A549 (cell line): ENCODE measurements at regions of chr11 and their contacts with region 1.

Region 1: GRCh38 chr11:87290304-87290922 is 252.7 kb downstream of the TMEM135 start:
- DNase-seq: peak; percentile 42 to 59
- ATAC-seq: peak; percentile 66 to 73; a peak in 5 of 6 replicates
- H3K4me3 ChIP-seq: no peak overlapping the region
- H3K27ac ChIP-seq: no peak overlapping the region
- H3K4me1 ChIP-seq: no peaks in the 10 kb centered on the region
- CTCF ChIP-seq: peak; percentile 86
- EP300 ChIP-seq: no peak
- POLR2A ChIP-seq: no peak
- RAD21 ChIP-seq: peak; percentile 85 to 91

Region 2: GRCh38 chr11:86930957-86931547 is 359.4 kb before region 1 on chr11:
- CTCF ChIA-PET with region 1: interaction called, 11 read pairs
- POLR2A ChIA-PET with region 1: no interaction called
- DNase-seq: no peak
- ATAC-seq: no peak
- H3K4me3 ChIP-seq: no peak overlapping the region
- H3K27ac ChIP-seq: no peak overlapping the region
- H3K4me1 ChIP-seq: peaks cover 14% of the 10 kb centered on the region
- CTCF ChIP-seq: no peak
- EP300 ChIP-seq: no peak
- POLR2A ChIP-seq: no peak
- RAD21 ChIP-seq: no peak

Region 3: DNA sequence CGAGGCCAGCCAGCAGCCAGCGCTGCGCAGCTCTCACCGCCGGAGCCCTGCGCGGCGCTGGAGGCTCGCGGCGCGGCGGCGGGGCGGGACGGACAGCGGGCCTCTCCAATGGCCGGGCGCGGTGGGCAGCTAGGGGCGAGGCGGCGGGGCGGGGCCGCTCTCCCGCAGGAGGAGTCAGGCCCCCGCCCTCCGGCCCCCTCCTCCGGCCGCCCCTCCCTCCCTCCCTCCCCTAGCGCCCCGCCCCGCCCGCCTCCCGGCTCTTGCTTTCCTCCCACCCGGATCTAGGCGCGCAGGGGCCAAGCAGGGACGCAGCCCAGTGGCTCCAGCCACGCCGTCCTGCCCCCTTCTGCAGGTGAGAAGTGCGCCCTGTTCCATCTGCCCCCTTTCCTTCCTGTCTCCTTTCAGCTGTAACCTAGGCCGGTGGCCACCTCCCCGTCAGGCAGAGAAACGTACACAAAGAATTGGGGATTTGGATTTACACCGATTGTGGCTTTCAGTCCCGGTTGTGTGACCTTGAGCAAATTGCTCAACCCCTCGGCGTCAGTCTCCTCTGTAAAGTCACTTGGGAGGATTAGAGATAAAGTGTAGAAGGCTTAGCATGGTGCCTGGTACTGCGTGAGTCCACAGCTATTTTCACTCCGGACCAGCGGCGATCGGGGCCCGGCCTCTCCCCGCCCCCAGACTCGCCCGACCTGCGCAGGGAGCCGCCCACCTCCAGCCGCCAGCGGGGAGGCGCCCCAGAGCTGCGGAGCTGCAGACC is 334.9 kb before region 1 on chr11 and contains the start of gene FZD4:
- CTCF ChIA-PET with region 1: interaction called, 11 read pairs
- POLR2A ChIA-PET with region 1: interaction called, 3 read pairs
- DNase-seq: peak; percentile 85 to 88
- ATAC-seq: peak; percentile 90 to 98
- H3K4me3 ChIP-seq: peak within 1 kb of the TSS; percentile 82
- H3K27ac ChIP-seq: peak within 1 kb of the TSS; percentile 78 to 92
- H3K4me1 ChIP-seq: peaks cover 9% of the 10 kb centered on the region; the same call in 1 of the 3 replicates
- CTCF ChIP-seq: peak; percentile 38; the same call in 2 of the 3 replicates
- EP300 ChIP-seq: no peak
- POLR2A ChIP-seq: no peak; the same call in 1 of the 2 replicates
- RAD21 ChIP-seq: peak; percentile 37 to 42; a peak in 3 of 5 replicates
- polyA plus RNA-seq, gene FZD4: 0.90 and 1.3 TPM in 2 replicates

Region 4: GRCh38 chr11:86990515-86990914 is 299.9 kb before region 1 on chr11:
- CTCF ChIA-PET with region 1: interaction called, 13 read pairs
- POLR2A ChIA-PET with region 1: no interaction called
- DNase-seq: peak in 1 of 2 experiments; percentile 22
- ATAC-seq: no peak
- H3K4me3 ChIP-seq: no peak overlapping the region
- H3K27ac ChIP-seq: no peak overlapping the region
- H3K4me1 ChIP-seq: peaks cover 4% of the 10 kb centered on the region; the same call in 1 of the 3 replicates
- CTCF ChIP-seq: no peak
- EP300 ChIP-seq: no peak
- POLR2A ChIP-seq: no peak
- RAD21 ChIP-seq: no peak

Region 5: GRCh38 chr11:87173185-87174039 is 117.0 kb before region 1 on chr11:
- CTCF ChIA-PET with region 1: no interaction called
- POLR2A ChIA-PET with region 1: no interaction called
- DNase-seq: peak; percentile 38 to 68
- ATAC-seq: peak; percentile 83 to 95
- H3K4me3 ChIP-seq: no peak overlapping the region
- H3K27ac ChIP-seq: peak overlapping the region; percentile 24 to 44; a peak in 4 of 6 replicates
- H3K4me1 ChIP-seq: peaks cover 36% of the 10 kb centered on the region
- CTCF ChIP-seq: no peak
- EP300 ChIP-seq: 0 out of 5 replicates have a peak, but pooled peaks of 1 of the 2 experiments have one; percentile 13
- POLR2A ChIP-seq: no peak
- RAD21 ChIP-seq: no peak

Region 6: DNA sequence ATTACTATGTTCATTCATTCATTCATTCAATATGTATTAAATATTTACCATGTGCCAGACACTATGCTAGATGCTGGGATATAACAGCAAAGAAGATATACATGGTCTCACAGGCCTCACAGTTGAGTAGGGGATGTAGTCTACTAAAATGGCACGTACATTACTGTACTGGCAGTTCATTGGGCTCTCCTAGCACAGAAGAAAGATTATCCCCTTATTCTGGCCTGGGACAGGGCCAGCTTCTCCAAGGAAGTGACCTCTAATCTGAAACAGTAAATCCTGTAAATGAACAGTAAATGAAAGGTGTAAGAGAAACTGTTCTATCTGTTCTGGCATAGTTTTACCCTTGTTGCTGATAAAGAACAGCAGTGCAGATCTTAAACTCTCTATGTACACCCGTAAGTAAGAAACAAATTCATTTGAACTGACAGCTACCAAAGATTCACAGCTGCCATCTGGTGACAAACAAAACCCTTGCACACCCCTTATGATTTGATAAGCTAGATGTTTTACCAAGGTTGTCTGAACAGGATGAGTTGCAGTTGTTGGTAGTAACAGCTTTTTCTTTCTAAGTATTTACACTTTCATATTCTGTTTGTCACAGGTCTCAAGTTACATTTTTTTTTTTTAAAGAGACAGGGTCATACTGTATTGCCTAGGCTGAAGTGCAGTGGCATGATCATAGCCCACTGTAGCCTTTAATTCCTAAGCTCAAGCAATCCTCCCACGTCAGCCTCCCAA is 10.4 kb after region 1 on chr11:
- CTCF ChIA-PET with region 1: interaction called, 12 read pairs
- POLR2A ChIA-PET with region 1: no interaction called
- DNase-seq: peak in 1 of 2 experiments; percentile 7
- ATAC-seq: peak in 1 of 2 experiments; percentile 34; a peak in 4 of 6 replicates
- H3K4me3 ChIP-seq: no peak overlapping the region
- H3K27ac ChIP-seq: no peak overlapping the region
- H3K4me1 ChIP-seq: no peaks in the 10 kb centered on the region
- CTCF ChIP-seq: no peak
- EP300 ChIP-seq: no peak
- POLR2A ChIP-seq: no peak
- RAD21 ChIP-seq: no peak